CD4-positive, alpha-beta memory T cell (primary cell): ENCODE measurements at regions of chrX and their contacts with region 1.

Region 1: GRCh38 chrX:1657367-1658070 is 42.7 kb downstream of the ASMT start:
- DNase-seq: peak; percentile 46 to 86 (median 64)
- H3K4me3 ChIP-seq: peak overlapping the region; percentile 77 to 89
- H3K4me3 Mint-ChIP-seq: peak overlapping the region; percentile 93 to 98 (median 94)
- H3K27ac ChIP-seq: peak overlapping the region; percentile 82
- H3K27ac Mint-ChIP-seq: peak overlapping the region; percentile 86 to 99 (median 96)
- H3K4me1 ChIP-seq: peaks cover 42% of the 10 kb centered on the region
- H3K4me1 Mint-ChIP-seq: peaks cover 26 to 48% (median 35%) of the 10 kb centered on the region in 4 donors
- H3K27me3 ChIP-seq: no peaks in the 10 kb centered on the region
- H3K27me3 Mint-ChIP-seq: no peaks in the 10 kb centered on the region

Region 2: DNA sequence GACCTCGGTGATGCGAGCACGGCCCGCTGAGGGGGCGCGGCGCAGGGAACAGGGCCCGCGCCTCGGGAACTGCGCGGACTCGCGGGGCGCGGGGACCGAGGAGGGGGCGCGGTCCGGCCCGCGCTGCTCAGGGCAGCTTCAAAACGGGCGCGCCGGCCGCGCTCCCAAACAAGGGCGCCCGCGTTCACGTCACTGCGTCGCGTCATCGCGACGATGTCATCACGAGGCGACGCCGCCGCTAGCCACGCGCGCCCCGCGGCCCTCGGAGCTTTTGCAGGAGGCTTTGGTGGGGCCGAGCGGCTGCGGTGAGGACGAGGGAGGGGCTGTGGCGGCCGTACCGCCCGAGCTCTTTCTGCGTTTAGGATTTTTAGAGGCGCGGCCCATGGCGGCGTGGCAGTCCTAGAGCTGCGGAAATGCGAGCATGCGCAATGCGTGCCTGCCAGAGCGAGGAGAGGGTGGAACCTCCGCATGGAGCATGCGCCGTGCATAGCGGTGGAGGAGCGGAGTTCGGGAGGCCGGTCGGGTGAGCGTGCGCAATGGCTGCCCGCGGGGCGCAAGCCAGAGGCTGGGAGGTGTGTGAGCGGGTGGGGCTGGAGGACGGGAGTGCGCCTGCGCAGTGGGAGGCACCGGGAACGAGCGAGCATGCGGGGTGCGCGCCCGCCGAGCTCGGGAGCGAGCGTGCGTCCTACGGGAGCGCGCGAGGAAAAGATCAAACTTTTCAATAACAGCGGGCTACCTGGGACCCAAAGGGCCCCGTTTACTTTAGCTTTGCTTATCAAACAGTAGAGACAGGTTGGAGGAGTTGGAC is 1270.5 kb before region 1 on chrX and contains the start of gene PPP2R3B:
- CTCF ChIA-PET with region 1: no interaction called
- POLR2A ChIA-PET with region 1: no interaction called
- intact Hi-C with region 1: loop called (anchors 10 kb)
- DNase-seq: peak; percentile 98 to 100 (median 99)
- H3K4me3 ChIP-seq: peak within 1 kb of the TSS; percentile 29 to 99
- H3K4me3 Mint-ChIP-seq: peak within 1 kb of the TSS; percentile 85 to 96 (median 91)
- H3K27ac ChIP-seq: peak within 1 kb of the TSS; percentile 100
- H3K27ac Mint-ChIP-seq: peak within 1 kb of the TSS; percentile 92 to 100 (median 98)
- H3K4me1 ChIP-seq: peaks cover 6% of the 10 kb centered on the region
- H3K4me1 Mint-ChIP-seq: peaks cover 9 to 11% (median 10%) of the 10 kb centered on the region in 4 donors
- H3K27me3 ChIP-seq: no peaks in the 10 kb centered on the region
- H3K27me3 Mint-ChIP-seq: peaks cover 0 to 1% of the 10 kb centered on the region in 2 donors
- total RNA-seq, gene PPP2R3B: 42.3 to 45.2 TPM

Region 3: DNA sequence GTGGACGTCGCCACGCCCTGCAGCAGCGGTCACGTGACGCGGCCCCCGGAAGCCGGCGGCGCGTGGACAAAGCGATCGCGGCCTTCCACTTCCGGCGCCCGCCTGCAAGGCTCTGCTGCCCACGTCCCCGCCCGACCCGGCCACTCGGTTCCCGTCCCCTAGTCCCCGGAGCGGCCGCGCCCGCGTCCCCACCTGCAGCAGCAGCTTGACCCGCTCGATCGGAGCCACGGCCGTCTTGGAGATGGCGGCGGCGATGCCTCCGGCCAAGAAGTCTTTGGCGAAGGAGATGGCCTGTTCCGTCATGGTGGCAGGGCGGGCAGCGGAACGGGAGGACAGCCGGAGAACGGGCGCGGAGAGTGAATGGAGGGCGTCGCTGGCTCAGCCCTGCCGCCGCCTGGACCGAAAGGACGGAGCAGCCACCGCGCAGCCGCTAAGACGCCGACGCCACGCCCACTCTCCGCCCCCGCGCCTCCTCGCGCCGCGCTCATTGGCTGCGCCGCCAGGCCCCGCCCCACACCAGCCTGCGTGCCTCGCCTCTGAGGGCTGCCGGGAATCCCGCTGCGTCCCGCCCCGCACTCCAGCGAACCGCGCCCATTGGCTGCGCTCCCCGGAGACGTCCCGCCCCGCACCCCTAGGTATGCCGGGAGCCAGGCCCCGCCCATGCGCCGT is 265.7 kb before region 1 on chrX and contains the start of gene SLC25A6:
- CTCF ChIA-PET with region 1: no interaction called
- POLR2A ChIA-PET with region 1: no interaction called
- intact Hi-C with region 1: loop called (anchors 1 kb)
- DNase-seq: peak; percentile 98 to 99 (median 99)
- H3K4me3 ChIP-seq: peak within 1 kb of the TSS; percentile 61 to 94
- H3K4me3 Mint-ChIP-seq: peak within 1 kb of the TSS; percentile 88 to 94 (median 91)
- H3K27ac ChIP-seq: peak within 1 kb of the TSS; percentile 94
- H3K27ac Mint-ChIP-seq: peak within 1 kb of the TSS; percentile 83 to 96 (median 90)
- H3K4me1 ChIP-seq: peaks cover 47% of the 10 kb centered on the region
- H3K4me1 Mint-ChIP-seq: peaks cover 16 to 52% (median 34%) of the 10 kb centered on the region in 4 donors
- H3K27me3 ChIP-seq: no peaks in the 10 kb centered on the region
- H3K27me3 Mint-ChIP-seq: no peaks in the 10 kb centered on the region
- total RNA-seq, gene SLC25A6: 249 to 252 TPM

Region 4: DNA sequence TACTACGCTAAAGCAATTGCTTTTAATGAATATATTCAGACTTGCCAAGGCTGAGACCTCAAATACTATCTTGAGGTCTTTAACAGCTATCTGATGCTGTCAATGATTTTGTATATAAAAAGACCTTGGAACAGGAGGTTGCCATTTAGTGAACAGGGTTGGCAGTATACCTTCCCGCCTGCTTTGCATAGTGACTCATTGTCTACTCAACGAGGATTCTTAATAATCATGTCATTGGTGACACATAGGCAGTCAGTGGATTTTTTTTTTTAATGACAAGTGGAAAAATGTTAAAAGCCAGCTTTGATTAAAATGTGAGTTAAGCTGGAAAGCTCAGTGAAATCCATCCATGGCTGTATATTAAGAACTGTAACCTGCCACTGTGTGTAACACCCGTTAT is 121.3 kb after region 1 on chrX:
- CTCF ChIA-PET with region 1: no interaction called
- POLR2A ChIA-PET with region 1: no interaction called
- intact Hi-C with region 1: no loop called
- DNase-seq: no peak
- H3K4me3 ChIP-seq: no peak overlapping the region
- H3K4me3 Mint-ChIP-seq: no peak overlapping the region
- H3K27ac ChIP-seq: no peak overlapping the region
- H3K27ac Mint-ChIP-seq: no peak overlapping the region
- H3K4me1 ChIP-seq: no peaks in the 10 kb centered on the region
- H3K4me1 Mint-ChIP-seq: no peaks in the 10 kb centered on the region
- H3K27me3 ChIP-seq: no peaks in the 10 kb centered on the region
- H3K27me3 Mint-ChIP-seq: peaks cover 0 to 2% of the 10 kb centered on the region in 2 donors

Region 5: DNA sequence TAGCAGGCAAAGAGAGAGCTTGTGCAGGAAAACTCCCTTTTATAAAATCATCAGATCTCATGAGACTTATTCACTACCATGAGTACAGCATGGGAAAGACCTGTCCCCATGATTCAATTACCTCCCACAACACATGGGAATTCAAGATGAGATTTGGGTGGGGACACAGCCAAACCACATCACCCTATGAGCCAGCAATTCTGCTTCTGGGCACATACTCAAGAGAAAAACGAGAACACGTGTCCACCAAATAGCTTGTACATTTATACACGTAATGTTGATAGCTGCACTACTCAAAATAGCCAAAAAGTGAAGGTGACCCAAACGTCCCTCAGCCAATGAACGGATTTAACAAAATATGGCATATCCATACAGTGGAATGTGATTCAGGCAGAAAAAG is 937.7 kb after region 1 on chrX:
- CTCF ChIA-PET with region 1: no interaction called
- POLR2A ChIA-PET with region 1: no interaction called
- intact Hi-C with region 1: loop called (anchors 1 kb)
- DNase-seq: no peak
- H3K4me3 ChIP-seq: no peak overlapping the region
- H3K4me3 Mint-ChIP-seq: no peak overlapping the region
- H3K27ac ChIP-seq: no peak overlapping the region
- H3K27ac Mint-ChIP-seq: no peak overlapping the region
- H3K4me1 ChIP-seq: no peaks in the 10 kb centered on the region
- H3K4me1 Mint-ChIP-seq: peaks cover 11 to 16% (median 15%) of the 10 kb centered on the region in 4 donors
- H3K27me3 ChIP-seq: no peaks in the 10 kb centered on the region
- H3K27me3 Mint-ChIP-seq: no peaks in the 10 kb centered on the region

Region 6: DNA sequence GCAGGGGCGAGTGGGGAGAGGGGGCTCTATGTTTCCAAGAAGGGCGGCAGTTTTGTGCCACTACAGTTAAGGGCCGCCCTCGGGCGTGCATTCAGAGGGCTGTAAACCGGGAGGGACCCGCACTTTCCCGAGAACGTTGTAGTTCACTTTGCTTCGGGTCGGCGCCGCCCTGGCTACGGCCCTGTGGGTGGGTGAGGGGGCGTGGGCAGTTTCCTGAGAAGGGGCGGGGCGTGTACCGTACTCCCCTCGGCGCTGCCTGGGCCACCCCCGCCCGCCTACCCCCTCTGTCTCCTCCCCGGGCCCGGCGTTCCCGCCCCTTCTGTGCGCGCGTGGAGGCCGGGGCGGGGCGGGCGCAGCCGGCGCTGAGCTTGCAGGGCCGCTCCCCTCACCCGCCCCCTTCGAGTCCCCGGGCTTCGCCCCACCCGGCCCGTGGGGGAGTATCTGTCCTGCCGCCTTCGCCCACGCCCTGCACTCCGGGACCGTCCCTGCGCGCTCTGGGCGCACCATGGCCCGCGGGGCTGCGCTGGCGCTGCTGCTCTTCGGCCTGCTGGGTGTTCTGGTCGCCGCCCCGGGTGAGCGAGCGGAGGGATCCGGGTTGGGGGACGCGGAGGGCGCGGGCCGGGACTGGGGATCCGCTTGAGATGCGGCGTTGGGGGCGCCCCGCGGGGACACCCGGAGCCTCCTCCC is 1033.5 kb after region 1 on chrX and contains the start of gene CD99:
- CTCF ChIA-PET with region 1: no interaction called
- POLR2A ChIA-PET with region 1: no interaction called
- intact Hi-C with region 1: loop called (anchors 5 kb)
- DNase-seq: peak; percentile 87 to 95 (median 88)
- H3K4me3 ChIP-seq: peak within 1 kb of the TSS; percentile 96 to 98
- H3K4me3 Mint-ChIP-seq: peak within 1 kb of the TSS; percentile 92 to 99 (median 96)
- H3K27ac ChIP-seq: peak within 1 kb of the TSS; percentile 72
- H3K27ac Mint-ChIP-seq: peak within 1 kb of the TSS; percentile 86 to 97 (median 93)
- H3K4me1 ChIP-seq: peaks cover 34% of the 10 kb centered on the region
- H3K4me1 Mint-ChIP-seq: peaks cover 23 to 48% (median 33%) of the 10 kb centered on the region in 4 donors
- H3K27me3 ChIP-seq: no peaks in the 10 kb centered on the region
- H3K27me3 Mint-ChIP-seq: no peaks in the 10 kb centered on the region
- total RNA-seq, gene CD99: 283 to 289 TPM